ENCODE measurements at regions of chr1 and their contacts with region 1.

Region 1: DNA sequence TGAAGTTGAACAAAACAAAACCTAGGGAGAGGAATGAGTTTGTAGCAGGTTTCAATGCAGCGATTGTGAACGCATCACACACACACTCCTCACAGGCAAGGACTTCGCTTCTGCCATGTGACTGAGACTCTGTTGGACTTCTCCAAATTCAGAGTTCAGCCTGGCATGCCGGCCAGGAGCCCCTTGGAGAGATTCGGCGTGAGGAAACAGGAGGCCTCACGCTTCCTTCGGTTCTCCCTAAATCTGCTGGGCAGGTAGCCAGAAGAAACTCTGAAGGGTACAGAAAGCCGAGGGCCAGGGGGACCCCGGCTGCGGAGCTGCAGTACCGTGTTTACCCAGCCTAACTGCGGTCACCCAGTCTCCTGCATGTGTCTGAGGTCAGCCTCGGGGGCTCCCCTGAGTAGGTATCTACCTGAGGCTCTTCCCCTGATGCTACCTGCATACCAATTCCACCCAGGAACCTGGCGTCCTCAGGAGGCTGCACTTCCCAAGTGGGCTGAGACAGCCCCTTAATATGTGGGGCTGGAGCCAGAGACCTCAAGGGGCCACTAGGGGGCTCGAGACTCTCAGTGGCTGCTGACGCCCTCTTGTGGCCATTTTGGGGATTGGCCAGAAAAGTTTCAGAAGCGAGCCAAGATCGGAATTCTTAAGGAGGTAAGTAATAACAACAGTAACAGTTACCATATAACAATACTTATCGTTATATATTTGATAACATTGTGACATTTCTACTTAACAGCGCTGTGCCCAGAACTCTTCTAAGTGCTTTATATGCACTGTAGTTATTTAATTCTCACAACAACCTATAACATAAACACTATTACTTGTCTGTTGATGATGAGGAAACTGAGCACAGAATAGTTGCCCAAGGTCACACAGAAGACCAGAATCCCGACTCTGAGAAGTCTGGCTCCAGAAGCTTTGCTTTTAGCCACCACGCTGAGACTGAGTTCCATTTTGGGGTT is 2.7 kb upstream of the ANXA9 start:
- DNase-seq: peak; percentile 26
- H3K4me3 ChIP-seq: no peak overlapping the region
- CTCF ChIP-seq: peak; percentile 100

Region 2: GRCh38 chr1:150876119-150876454 is 103.3 kb before region 1 on chr1:
- CTCF ChIA-PET with region 1: no interaction called
- POLR2A ChIA-PET with region 1: no interaction called
- DNase-seq: no peak
- H3K4me3 ChIP-seq: peak overlapping the region; percentile 86
- CTCF ChIP-seq: no peak

Region 3: DNA sequence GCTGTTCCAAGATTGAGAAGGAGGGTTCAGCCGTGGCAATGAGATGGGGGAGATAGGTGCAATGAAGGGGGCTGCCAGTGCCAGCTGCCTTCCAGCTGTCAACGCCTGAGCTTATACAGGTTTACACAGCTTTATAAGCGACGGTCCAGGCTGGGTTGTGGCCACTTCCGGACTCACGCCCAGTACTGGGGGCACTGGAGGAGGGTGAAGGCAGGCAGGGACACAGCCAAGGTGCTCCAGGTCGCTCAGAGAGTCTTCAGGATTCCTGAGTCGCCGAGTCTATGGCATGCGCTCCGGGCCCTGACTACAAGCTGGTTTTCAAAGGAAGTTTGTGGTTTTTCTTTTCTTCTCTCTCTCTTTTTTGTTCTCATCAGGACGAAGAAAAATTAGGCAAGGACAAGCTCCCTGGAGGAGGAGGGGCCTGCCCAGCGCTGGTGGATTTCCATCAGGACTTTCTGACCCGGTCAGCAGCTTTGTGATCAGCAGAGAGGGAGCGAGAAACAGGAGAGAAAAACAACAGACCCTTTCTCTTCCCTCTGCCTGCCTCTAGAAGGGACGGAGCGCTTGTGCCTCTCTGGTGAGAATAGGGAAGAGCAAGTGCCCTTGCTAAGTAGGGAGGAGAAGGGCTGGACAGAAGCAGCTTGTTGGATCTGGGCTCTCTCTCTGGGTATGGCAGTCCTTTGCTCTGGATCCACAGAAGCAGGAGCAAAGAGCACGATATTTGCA is 27.1 kb after region 1 on chr1 and contains the start of gene MINDY1:
- CTCF ChIA-PET with region 1: interaction called, 551 read pairs
- POLR2A ChIA-PET with region 1: interaction called, 5 read pairs
- DNase-seq: no peak
- H3K4me3 ChIP-seq: peak within 1 kb of the TSS; percentile 71
- CTCF ChIP-seq: peak; percentile 80

Measured in AG04449 (cell line).